Vagina (tissue), 2 donors: ENCODE measurements at regions of chr11 and their contacts with region 1.

Region 1: DNA sequence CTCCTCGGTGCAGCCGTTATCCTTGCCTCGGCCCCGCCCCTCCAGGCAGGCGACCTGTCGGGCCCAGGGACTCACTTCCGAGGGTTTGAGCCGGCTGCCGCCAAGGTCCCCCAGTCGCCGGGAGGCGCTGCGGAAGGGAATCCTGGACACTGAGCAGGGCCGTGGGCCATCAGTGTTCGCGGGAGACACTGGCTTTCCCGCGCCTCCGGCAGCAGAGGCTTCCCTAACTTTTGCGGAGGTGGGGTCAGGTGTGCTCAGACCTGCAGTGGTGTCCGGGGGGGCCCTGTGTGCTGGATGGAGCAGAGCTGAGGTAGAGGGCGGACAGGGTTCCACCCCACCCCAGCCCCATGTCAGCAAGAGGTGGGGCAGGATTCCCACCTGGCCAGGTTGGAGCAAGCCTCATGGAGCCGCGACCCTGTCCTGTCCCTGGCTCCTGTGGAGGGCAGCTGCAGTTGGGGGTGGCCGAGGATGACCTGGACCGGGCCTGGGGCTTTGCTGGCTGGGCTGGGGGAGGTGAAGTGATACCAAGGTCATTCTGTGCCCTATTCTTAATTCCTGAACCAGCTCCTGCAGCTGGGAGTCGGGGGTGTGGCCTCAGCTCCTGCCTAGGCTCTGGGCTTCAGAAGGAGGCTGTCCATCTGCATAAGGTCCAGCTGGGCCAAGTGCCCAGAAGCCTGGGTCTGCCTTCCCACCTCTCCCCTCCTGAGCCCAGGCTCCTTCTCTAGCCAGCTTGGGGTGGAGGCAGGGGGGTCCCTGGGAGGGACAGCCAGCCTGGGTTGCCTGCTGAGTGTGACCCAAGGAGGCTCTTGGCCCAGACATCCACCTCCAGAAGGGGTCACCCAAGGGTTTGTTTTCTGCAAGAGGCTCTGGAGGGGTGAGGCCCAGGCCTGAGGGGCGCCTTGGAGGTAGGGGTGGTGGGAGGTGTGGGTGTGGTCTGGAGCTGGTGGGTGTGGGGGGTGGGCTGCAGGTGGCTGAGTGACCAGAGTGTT is 8.4 kb downstream of the TSPAN4 start:
- DNase-seq: no peak
- H3K4me3 ChIP-seq: no peak overlapping the region
- H3K27ac ChIP-seq: no peak overlapping the region
- H3K4me1 ChIP-seq: peaks cover 63% of the 10 kb centered on the region
- H3K27me3 ChIP-seq: no peaks in the 10 kb centered on the region
- CTCF ChIP-seq: no peak
- POLR2A ChIP-seq: no peak

Region 2: GRCh38 chr11:976431-977160 is 125.5 kb after region 1 on chr11:
- intact Hi-C with region 1: no loop called
- DNase-seq: no peak
- H3K4me3 ChIP-seq: no peak overlapping the region
- H3K27ac ChIP-seq: no peak overlapping the region
- H3K4me1 ChIP-seq: no peaks in the 10 kb centered on the region
- H3K27me3 ChIP-seq: no peaks in the 10 kb centered on the region
- CTCF ChIP-seq: no peak
- POLR2A ChIP-seq: no peak

Region 3: GRCh38 chr11:1050581-1051355 is 199.7 kb after region 1 on chr11:
- intact Hi-C with region 1: loop called (anchors 5 kb)
- DNase-seq: no peak
- H3K4me3 ChIP-seq: no peak overlapping the region
- H3K27ac ChIP-seq: no peak overlapping the region
- H3K4me1 ChIP-seq: peaks cover 9% of the 10 kb centered on the region
- H3K27me3 ChIP-seq: no peaks in the 10 kb centered on the region
- CTCF ChIP-seq: peak; percentile 69 to 86 (median 73)
- POLR2A ChIP-seq: no peak

Region 4: DNA sequence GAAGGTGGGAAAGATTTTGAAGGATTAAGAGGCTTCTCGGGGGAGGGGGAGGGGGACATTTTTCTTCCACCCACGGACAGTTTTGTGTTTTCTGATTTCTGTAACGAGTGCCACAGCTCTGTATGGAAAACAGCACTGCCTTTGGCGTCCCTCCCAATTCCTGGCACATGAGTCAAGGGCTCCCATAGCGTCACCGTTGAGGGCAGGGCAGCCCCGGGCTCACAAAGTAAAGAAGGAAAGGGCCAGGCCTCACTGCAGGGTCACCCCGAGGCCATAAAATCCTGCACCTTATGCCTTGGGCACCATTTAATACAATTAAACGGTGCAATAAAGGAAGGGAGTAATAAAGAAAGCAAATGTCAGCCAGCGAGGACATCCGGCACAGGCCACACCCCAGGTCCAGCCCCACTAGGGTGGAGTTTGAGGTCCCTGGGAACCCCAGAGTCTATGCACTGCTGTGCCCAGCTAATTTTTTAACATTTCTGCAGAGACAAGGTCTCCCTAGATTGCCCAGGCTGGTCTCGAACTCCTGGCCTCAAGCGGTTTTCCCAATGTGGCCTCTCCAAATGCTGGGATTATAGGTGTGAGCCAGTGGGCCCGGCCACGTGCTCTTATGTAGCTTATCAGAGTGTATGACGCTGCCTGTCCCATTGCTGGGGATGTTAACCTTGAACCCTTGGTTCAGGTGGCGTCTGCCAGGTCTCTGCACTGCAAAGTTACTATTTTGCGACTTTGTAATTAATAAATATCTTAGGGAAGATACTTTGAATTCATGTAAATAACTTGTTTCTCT is 210.0 kb after region 1 on chr11:
- intact Hi-C with region 1: no loop called
- DNase-seq: no peak
- H3K4me3 ChIP-seq: no peak overlapping the region
- H3K27ac ChIP-seq: no peak overlapping the region
- H3K4me1 ChIP-seq: peaks cover 9% of the 10 kb centered on the region
- H3K27me3 ChIP-seq: no peaks in the 10 kb centered on the region
- CTCF ChIP-seq: no peak
- POLR2A ChIP-seq: no peak

Region 5: GRCh38 chr11:1453611-1454034 is 602.6 kb after region 1 on chr11:
- intact Hi-C with region 1: no loop called
- DNase-seq: no peak
- H3K4me3 ChIP-seq: no peak overlapping the region
- H3K27ac ChIP-seq: no peak overlapping the region
- H3K4me1 ChIP-seq: peaks cover 10% of the 10 kb centered on the region
- H3K27me3 ChIP-seq: no peaks in the 10 kb centered on the region
- CTCF ChIP-seq: peak in 1 of 3 experiments; percentile 21
- POLR2A ChIP-seq: no peak